ENCODE measurements at regions of chr16 and their contacts with region 1.

Region 1: GRCh38 chr16:2926650-2927646 is 15.2 kb downstream of the FLYWCH1 start:
- DNase-seq: peak; percentile 90 to 92 (median 91)
- H3K4me3 ChIP-seq: peak overlapping the region in 1 of 7 experiments; percentile 61
- H3K27ac ChIP-seq: no peak overlapping the region
- H3K4me1 ChIP-seq: peaks cover 0 to 7% (median 5%) of the 10 kb centered on the region in 4 experiments
- H3K27me3 ChIP-seq: no peaks in the 10 kb centered on the region

Region 2: DNA sequence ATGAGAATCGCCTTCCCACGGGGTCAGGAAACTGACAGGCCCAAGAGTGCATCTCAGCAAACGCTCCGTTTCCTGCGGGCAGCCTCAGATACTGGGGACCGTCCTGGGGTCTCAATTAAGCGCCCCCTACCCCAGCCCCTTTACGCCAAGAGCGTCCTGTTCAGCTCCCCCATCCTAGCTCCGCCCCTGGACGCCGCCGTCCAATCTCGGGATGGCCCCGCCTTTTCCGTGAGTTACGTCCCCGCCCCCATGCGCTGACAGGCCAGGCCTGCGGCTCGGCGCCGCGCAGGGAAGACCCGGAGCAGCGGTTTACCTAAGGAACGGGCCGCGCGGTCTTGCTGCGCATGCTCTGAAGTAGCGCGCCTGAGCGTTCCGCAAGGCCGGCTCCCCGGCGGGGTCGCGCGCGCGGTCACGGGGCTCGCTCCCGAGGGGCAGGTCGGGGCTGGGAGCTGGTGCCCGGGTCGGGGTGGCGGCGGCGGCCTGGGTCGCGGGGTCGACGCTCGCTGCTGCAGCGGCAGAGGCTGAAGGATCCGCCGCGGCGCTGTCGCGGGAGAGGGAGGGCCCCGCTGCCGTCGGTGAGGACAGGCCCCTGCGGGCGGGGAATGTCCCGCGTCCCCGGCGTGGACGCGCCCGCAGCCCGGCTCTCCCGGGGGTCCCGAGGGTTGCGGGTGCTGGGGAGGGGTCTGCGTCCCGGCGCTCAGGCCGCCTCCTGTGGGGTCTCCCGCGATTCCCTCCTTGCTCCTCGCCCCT is 15.2 kb before region 1 on chr16 and contains the start of gene FLYWCH1:
- CTCF ChIA-PET with region 1: interaction called, 16 read pairs
- POLR2A ChIA-PET with region 1: no interaction called
- DNase-seq: peak; percentile 97 to 99 (median 98)
- H3K4me3 ChIP-seq: peak within 1 kb of the TSS; percentile 65 to 93 (median 85)
- H3K27ac ChIP-seq: peak within 1 kb of the TSS in 1 of 2 experiments; percentile 77
- H3K4me1 ChIP-seq: peaks cover 0 to 20% (median 15%) of the 10 kb centered on the region in 4 experiments
- H3K27me3 ChIP-seq: no peaks in the 10 kb centered on the region

Region 3: DNA sequence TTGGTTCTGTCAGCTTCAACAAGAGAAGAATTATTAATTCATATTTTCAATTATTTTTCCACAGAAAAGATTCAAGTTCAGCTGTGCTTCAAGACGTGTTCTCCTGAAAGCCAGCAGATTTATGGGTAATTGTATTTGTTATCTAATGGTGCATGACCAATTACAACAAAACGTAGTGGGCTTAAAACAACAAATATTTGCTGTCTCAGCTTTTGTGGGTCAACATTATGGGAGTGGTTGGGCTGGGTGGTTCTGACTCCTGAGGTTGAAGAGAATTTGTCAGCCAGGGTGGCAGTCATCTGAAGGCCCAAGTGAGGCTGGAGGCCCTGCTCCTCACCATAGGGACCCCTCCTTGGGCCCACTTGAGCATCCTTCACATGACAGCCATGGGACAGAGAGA is 13.0 kb after region 1 on chr16:
- CTCF ChIA-PET with region 1: interaction called, 11 read pairs
- POLR2A ChIA-PET with region 1: no interaction called
- DNase-seq: no peak
- H3K4me3 ChIP-seq: no peak overlapping the region
- H3K27ac ChIP-seq: no peak overlapping the region
- H3K4me1 ChIP-seq: no peaks in the 10 kb centered on the region
- H3K27me3 ChIP-seq: no peaks in the 10 kb centered on the region